ENCODE measurements at regions of chr11 and their contacts with region 1.

Region 1: GRCh38 chr11:32893343-32894148 is 935 bp downstream of the QSER1 start:
- DNase-seq: peak; percentile 29
- H3K4me3 Mint-ChIP-seq: peak overlapping the region; percentile 94
- H3K27ac Mint-ChIP-seq: peak overlapping the region; percentile 92
- H3K4me1 Mint-ChIP-seq: peaks cover 35% of the 10 kb centered on the region
- H3K27me3 Mint-ChIP-seq: peaks cover 14% of the 10 kb centered on the region

Region 2: GRCh38 chr11:32821517-32821916 is 72.0 kb before region 1 on chr11:
- intact Hi-C with region 1: loop called (anchors 2 kb)
- DNase-seq: no peak
- H3K4me3 Mint-ChIP-seq: no peak overlapping the region
- H3K27ac Mint-ChIP-seq: no peak overlapping the region
- H3K4me1 Mint-ChIP-seq: peaks cover 10% of the 10 kb centered on the region
- H3K27me3 Mint-ChIP-seq: no peaks in the 10 kb centered on the region

Region 3: GRCh38 chr11:32905028-32905667 is 11.6 kb after region 1 on chr11:
- intact Hi-C with region 1: no loop called
- DNase-seq: no peak
- H3K4me3 Mint-ChIP-seq: no peak overlapping the region
- H3K27ac Mint-ChIP-seq: no peak overlapping the region
- H3K4me1 Mint-ChIP-seq: peaks cover 12% of the 10 kb centered on the region
- H3K27me3 Mint-ChIP-seq: no peaks in the 10 kb centered on the region

Region 4: DNA sequence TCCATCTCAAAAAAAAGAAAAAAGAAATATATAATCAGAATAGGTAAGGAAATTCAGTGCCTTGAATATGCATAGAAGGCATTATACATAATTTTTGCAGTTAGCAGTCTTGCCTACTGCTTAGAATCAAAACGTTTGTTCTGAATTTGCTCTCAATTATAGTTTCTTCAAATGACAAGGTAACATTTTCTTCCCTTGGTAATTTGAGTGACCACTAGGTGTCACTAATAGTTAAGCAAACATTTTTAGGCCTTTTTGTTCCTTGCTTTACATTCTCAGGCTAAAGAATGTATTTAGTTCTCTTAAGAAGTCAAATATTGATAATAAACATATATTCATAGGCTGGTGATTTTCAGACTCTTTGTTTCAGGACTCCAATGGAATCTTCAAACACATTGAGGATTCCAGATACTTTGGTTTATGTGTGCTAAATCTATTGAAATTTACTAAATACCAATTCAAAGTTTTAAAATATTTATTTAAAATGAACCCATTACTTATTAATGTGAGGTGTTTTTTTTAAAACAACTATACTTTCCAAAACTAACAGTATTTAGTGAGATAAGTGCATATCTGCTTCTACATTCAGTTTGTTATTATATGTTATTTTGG is 67.1 kb after region 1 on chr11:
- intact Hi-C with region 1: loop called (anchors 5 kb)
- DNase-seq: no peak
- H3K4me3 Mint-ChIP-seq: no peak overlapping the region
- H3K27ac Mint-ChIP-seq: no peak overlapping the region
- H3K4me1 Mint-ChIP-seq: peaks cover 13% of the 10 kb centered on the region
- H3K27me3 Mint-ChIP-seq: no peaks in the 10 kb centered on the region

Region 5: GRCh38 chr11:33065445-33066178 is 172.1 kb after region 1 on chr11:
- intact Hi-C with region 1: loop called (anchors 1 kb)
- DNase-seq: peak; percentile 47
- H3K4me3 Mint-ChIP-seq: no peak overlapping the region
- H3K27ac Mint-ChIP-seq: no peak overlapping the region
- H3K4me1 Mint-ChIP-seq: peaks cover 49% of the 10 kb centered on the region
- H3K27me3 Mint-ChIP-seq: no peaks in the 10 kb centered on the region

Region 6: DNA sequence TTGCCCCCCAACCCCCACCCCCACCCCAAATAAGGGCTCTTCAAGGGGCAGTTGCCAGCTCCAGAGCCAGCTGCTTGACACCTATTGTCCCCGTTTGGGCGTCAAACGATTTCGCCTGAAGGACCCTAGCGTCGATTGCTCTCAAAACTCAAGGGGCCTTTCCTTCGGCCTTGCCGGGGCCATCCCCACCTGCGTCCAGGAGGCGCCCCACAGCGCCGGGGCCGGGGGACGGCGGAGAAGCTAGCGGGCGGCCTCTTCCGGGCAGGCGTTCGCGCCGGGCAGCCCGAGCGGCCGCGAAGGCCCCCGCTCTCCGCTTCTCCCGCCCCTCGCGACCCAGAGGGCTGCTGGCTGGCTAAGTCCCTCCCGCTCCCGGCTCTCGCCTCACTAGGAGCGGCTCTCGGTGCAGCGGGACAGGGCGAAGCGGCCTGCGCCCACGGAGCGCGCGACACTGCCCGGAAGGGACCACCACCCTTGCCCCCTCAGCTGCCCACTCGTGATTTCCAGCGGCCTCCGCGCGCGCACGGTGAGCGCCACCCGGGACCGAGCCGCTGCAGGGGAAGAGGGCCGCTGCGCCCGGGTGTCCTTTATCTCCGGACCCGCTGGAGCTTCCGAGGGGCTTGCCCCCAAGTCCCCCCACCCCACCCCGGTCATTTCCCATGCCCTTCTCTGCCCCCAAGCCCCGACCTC is 1157.9 kb after region 1 on chr11 and contains the start of gene CAPRIN1:
- intact Hi-C with region 1: loop called (anchors 5 kb)
- DNase-seq: peak; percentile 80
- H3K4me3 Mint-ChIP-seq: peak within 1 kb of the TSS; percentile 99
- H3K27ac Mint-ChIP-seq: peak within 1 kb of the TSS; percentile 97
- H3K4me1 Mint-ChIP-seq: peaks cover 8% of the 10 kb centered on the region
- H3K27me3 Mint-ChIP-seq: no peaks in the 10 kb centered on the region
- total RNA-seq, gene CAPRIN1: 285 and 289 TPM in 2 replicates

Measured in activated T-helper 1 cell treated with anti-CD3 and anti-CD28 coated beads, Interleukin-12 subunit alpha, Interleukin-12 subunit beta, Interleukin-2, Interleukin-4 antibody, amounts not matched to agents 30 ng/mL and 10 ng/mL and 1 ng/mL, durations not matched to agents 14 hours and 24 hours and 36 hours (primary cell).